ENCODE measurements at regions of chr19 and their contacts with region 1.

Region 1: GRCh38 chr19:18322759-18323460 is at the start of gene LSM4:
- DNase-seq: peak; percentile 98 to 99
- H3K4me3 ChIP-seq: peak within 1 kb of the TSS; percentile 72 to 85
- H3K27ac ChIP-seq: peak within 1 kb of the TSS; percentile 84 to 90
- H3K4me1 ChIP-seq: peaks cover 0 to 39% (median 29%) of the 10 kb centered on the region in 4 donors
- H3K27me3 ChIP-seq: no peaks in the 10 kb centered on the region
- CTCF ChIP-seq: peak in 1 of 2 experiments; percentile 5

Region 2: GRCh38 chr19:18205200-18205892 is 117.6 kb before region 1 on chr19:
- intact Hi-C with region 1: loop called (anchors 5 kb)
- DNase-seq: peak; percentile 91 to 95
- H3K4me3 ChIP-seq: peak overlapping the region; percentile 51 to 72
- H3K27ac ChIP-seq: peak overlapping the region; percentile 88 to 92
- H3K4me1 ChIP-seq: peaks cover 0 to 22% (median 14%) of the 10 kb centered on the region in 4 donors
- H3K27me3 ChIP-seq: peaks cover 0 to 4% of the 10 kb centered on the region in 2 donors
- CTCF ChIP-seq: no peak

Region 3: DNA sequence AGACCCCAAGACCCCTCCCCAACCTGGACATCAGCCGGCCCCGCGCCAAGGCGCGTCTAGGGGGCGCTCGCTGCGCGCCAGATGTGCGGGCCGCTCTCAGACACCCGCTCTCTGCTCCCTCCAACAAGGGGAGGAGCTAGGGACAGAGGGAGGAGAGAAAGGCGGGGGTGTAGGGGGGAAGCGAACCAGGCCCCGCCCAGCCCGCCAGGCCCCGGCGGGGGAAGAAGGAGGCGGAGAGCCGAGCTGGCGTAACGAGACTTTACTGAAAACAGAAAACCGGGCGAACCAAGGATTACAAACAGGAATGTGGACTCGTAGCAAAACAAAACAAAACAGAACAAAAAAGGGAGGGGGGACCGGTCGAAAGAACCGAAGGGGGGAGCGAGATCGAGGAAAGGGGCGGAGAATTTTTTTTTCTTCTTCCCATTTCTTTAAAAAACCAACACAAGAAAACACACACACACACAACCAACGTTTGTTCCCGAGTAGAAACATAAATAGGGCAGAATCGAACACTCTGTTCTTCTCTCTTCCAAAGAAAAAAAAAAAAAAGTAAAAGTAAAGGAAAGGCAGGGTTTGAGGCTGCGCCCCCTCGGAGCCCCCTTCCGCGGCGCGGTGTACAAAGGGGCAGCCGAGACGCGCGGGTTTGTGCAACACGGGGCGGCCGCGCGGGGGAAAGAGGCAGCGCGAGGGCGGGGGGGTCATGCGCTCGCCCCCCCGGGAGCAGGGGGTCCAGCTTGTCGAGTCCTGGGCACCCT is 43.2 kb before region 1 on chr19:
- intact Hi-C with region 1: loop called (anchors 2 kb)
- DNase-seq: peak; percentile 92 to 97
- H3K4me3 ChIP-seq: peak overlapping the region; percentile 65 to 99
- H3K27ac ChIP-seq: peak overlapping the region; percentile 100
- H3K4me1 ChIP-seq: peaks cover 4 to 64% (median 43%) of the 10 kb centered on the region in 4 donors
- H3K27me3 ChIP-seq: no peaks in the 10 kb centered on the region
- CTCF ChIP-seq: peak; percentile 82 to 88

Region 4: DNA sequence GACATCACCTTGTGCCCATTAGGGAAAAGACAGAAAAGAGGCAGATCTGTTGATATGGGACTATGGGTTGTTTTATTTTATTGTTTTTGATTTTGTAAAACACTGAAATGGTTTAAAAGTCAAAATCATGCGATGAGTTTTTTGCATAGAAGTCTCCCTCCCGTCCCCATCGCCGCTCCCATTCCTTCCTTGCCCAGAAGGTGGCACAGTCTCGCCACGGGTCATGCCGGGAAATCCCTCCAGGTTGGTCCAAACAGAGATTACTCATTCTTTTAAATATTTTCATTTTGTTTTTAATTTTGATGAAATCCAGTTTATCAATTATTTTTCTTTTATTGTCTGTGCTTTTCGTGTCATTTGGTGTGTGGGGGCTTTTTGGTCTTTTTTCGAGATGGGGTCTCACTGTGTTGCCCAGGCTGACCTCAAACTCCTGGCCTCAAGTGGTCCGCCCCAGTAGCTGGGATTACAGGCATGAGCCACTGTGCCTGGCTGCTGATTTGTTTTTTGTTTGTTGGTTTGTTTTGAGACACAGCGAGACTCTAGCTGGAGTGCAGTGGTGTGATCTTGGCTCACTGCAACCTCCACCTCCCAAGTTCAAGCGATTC is 26.7 kb after region 1 on chr19:
- intact Hi-C with region 1: no loop called
- DNase-seq: peak in 1 of 2 donors; percentile 48
- H3K4me3 ChIP-seq: no peak overlapping the region
- H3K27ac ChIP-seq: no peak overlapping the region
- H3K4me1 ChIP-seq: no peaks in the 10 kb centered on the region
- H3K27me3 ChIP-seq: no peaks in the 10 kb centered on the region
- CTCF ChIP-seq: peak; percentile 64 to 69

Region 5: GRCh38 chr19:18464646-18465045 is 141.7 kb after region 1 on chr19:
- intact Hi-C with region 1: no loop called
- DNase-seq: peak; percentile 95 to 96
- H3K4me3 ChIP-seq: no peak overlapping the region
- H3K27ac ChIP-seq: peak overlapping the region; percentile 92
- H3K4me1 ChIP-seq: peaks cover 35 to 95% (median 72%) of the 10 kb centered on the region in 4 donors
- H3K27me3 ChIP-seq: no peaks in the 10 kb centered on the region
- CTCF ChIP-seq: no peak